AG04450 (cell line): ENCODE measurements at regions of chrX and their contacts with region 1.

Region 1: GRCh38 chrX:123779908-123780396 is 47.1 kb upstream of the THOC2 start:
- DNase-seq: no peak
- H3K4me3 ChIP-seq: no peak overlapping the region
- H3K27ac ChIP-seq: no peak overlapping the region
- H3K27me3 ChIP-seq: no peaks in the 10 kb centered on the region
- CTCF ChIP-seq: no peak

Region 2: GRCh38 chrX:123764967-123765871 is 14.7 kb before region 1 on chrX:
- CTCF ChIA-PET with region 1: interaction called, 24 read pairs
- POLR2A ChIA-PET with region 1: no interaction called
- DNase-seq: peak; percentile 55
- H3K4me3 ChIP-seq: peak overlapping the region; percentile 52
- H3K27ac ChIP-seq: no peak overlapping the region
- H3K27me3 ChIP-seq: no peaks in the 10 kb centered on the region
- CTCF ChIP-seq: no peak

Region 3: GRCh38 chrX:123906557-123907316 is 126.8 kb after region 1 on chrX:
- CTCF ChIA-PET with region 1: no interaction called
- POLR2A ChIA-PET with region 1: interaction called, 10 read pairs
- DNase-seq: no peak
- H3K4me3 ChIP-seq: no peak overlapping the region
- H3K27ac ChIP-seq: no peak overlapping the region
- H3K27me3 ChIP-seq: no peaks in the 10 kb centered on the region
- CTCF ChIP-seq: no peak